ENCODE measurements at regions of chr1 and their contacts with region 1.

Region 1: DNA sequence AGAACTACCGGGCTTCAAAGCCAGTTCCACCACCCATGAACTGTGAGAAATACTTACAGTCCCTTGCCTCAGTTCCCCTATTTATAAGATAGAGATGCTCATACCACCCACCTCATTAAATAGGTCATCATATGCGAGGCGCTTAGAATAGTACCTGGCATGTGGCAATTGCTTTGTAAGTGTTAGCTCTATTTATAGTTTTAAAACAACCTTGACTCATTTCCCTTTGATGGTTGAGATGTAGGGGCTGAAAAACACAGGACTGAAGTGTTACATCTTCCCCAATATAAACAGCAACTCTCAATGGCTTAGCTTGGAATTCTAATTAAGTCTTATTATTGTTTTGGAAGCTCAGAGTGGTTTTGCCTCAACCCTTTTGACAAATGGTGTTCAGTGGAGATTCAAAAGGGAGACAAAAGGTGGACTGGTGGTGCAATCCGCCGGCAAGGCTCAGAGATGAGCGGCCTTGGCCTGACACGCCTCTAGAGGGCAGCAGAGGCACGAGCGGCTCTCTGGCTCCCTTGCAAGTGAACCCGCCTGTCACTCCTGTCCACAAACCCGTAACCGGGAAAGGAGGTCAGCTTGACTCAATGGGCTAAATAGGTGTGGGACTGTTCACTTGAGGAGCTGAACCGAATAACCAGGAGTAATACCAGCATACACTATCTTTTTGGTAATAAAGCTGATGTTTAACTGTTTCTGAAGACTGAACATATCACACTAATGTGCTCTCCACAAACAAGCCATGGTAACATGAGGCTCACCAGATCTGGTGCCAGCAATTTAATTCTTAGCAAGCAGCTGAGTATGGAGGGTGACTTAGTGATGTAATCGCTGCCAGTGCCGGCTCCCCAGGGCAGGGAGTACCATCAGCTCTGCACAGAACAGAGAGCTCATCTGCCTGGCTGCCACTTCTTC is 19.5 kb upstream of the SMYD2 start:
- DNase-seq: peak; percentile 53 to 79
- ATAC-seq: peak; percentile 96 to 99
- H3K4me3 ChIP-seq: no peak overlapping the region
- H3K27ac ChIP-seq: 0 out of 6 replicates have a peak overlapping the region, but pooled peaks of 1 of the 2 experiments have one; percentile 39
- H3K4me1 ChIP-seq: peaks cover 13% of the 10 kb centered on the region; the same call in 2 of the 3 replicates
- CTCF ChIP-seq: peak; percentile 90
- EP300 ChIP-seq: no peak
- POLR2A ChIP-seq: no peak
- RAD21 ChIP-seq: peak; percentile 84 to 86

Region 2: GRCh38 chr1:213840575-213840974 is 420.9 kb before region 1 on chr1:
- CTCF ChIA-PET with region 1: no interaction called
- POLR2A ChIA-PET with region 1: no interaction called
- DNase-seq: no peak
- ATAC-seq: no peak
- H3K4me3 ChIP-seq: no peak overlapping the region
- H3K27ac ChIP-seq: no peak overlapping the region
- H3K4me1 ChIP-seq: no peaks in the 10 kb centered on the region
- CTCF ChIP-seq: no peak
- EP300 ChIP-seq: no peak
- POLR2A ChIP-seq: no peak
- RAD21 ChIP-seq: no peak

Region 3: DNA sequence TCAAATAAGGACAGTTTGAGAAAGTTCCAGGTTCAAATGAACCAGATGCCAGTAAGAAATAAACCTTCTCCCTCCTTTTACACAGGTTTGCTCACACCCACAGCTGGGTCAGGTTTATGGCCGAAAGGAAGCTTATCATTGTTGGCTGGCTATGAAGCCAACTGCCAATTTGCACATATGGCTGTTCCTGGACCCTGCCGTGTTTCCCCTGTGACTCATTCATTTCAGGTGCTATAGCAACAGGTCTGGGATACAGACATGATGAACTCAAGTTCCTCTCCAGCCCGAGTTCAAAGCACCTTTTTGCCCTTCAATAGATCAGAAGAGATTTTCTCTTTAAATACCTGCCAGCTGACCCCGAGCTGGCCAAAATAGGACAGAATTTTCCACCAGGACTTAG is 114.9 kb before region 1 on chr1:
- CTCF ChIA-PET with region 1: no interaction called
- POLR2A ChIA-PET with region 1: no interaction called
- DNase-seq: peak in 1 of 2 experiments; percentile 9
- ATAC-seq: no peak
- H3K4me3 ChIP-seq: no peak overlapping the region
- H3K27ac ChIP-seq: no peak overlapping the region
- H3K4me1 ChIP-seq: no peaks in the 10 kb centered on the region
- CTCF ChIP-seq: no peak
- EP300 ChIP-seq: no peak
- POLR2A ChIP-seq: no peak
- RAD21 ChIP-seq: no peak

Region 4: DNA sequence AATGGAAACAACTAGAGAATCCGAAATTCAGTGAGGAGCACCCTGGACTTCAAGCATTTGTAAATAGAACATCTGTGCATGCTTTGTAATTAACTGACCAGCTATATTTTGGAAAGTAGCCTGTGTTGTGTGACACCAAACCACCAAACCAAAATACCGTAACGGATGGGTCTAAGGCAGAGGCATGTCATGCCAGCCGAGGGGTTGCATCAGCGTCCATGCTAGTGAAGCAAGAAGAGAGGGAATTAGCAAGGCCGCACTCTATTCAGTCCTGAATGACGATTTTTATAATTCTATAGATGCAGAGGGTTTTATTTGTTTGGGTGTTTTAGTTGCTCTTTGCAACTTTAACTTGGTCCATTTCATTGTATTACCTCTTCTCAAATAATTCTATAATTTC is 97.3 kb before region 1 on chr1:
- CTCF ChIA-PET with region 1: no interaction called
- POLR2A ChIA-PET with region 1: no interaction called
- DNase-seq: no peak
- ATAC-seq: no peak
- H3K4me3 ChIP-seq: no peak overlapping the region
- H3K27ac ChIP-seq: no peak overlapping the region
- H3K4me1 ChIP-seq: no peaks in the 10 kb centered on the region
- CTCF ChIP-seq: no peak
- EP300 ChIP-seq: no peak
- POLR2A ChIP-seq: no peak
- RAD21 ChIP-seq: no peak

Region 5: GRCh38 chr1:214241060-214241459 is 20.4 kb before region 1 on chr1:
- CTCF ChIA-PET with region 1: interaction called, 11 read pairs
- POLR2A ChIA-PET with region 1: no interaction called
- DNase-seq: no peak
- ATAC-seq: no peak
- H3K4me3 ChIP-seq: no peak overlapping the region
- H3K27ac ChIP-seq: no peak overlapping the region
- H3K4me1 ChIP-seq: peaks cover 6% of the 10 kb centered on the region; the same call in 2 of the 3 replicates
- CTCF ChIP-seq: no peak
- EP300 ChIP-seq: no peak
- POLR2A ChIP-seq: no peak
- RAD21 ChIP-seq: no peak

Region 6: GRCh38 chr1:214289574-214290272 is 28.3 kb after region 1 on chr1:
- CTCF ChIA-PET with region 1: interaction called, 16 read pairs
- POLR2A ChIA-PET with region 1: no interaction called
- DNase-seq: no peak
- ATAC-seq: no peak
- H3K4me3 ChIP-seq: no peak overlapping the region
- H3K27ac ChIP-seq: no peak overlapping the region
- H3K4me1 ChIP-seq: peaks cover 4% of the 10 kb centered on the region; the same call in 1 of the 3 replicates
- CTCF ChIP-seq: no peak
- EP300 ChIP-seq: no peak
- POLR2A ChIP-seq: no peak
- RAD21 ChIP-seq: no peak

Region 7: GRCh38 chr1:214321705-214322453 is 60.4 kb after region 1 on chr1:
- CTCF ChIA-PET with region 1: interaction called, 251 read pairs
- POLR2A ChIA-PET with region 1: no interaction called
- DNase-seq: no peak
- ATAC-seq: no peak
- H3K4me3 ChIP-seq: no peak overlapping the region
- H3K27ac ChIP-seq: no peak overlapping the region
- H3K4me1 ChIP-seq: no peaks in the 10 kb centered on the region
- CTCF ChIP-seq: no peak
- EP300 ChIP-seq: no peak
- POLR2A ChIP-seq: no peak
- RAD21 ChIP-seq: no peak

Region 8: GRCh38 chr1:214632091-214632490 is 370.6 kb after region 1 on chr1:
- CTCF ChIA-PET with region 1: interaction called, 10 read pairs
- POLR2A ChIA-PET with region 1: no interaction called
- DNase-seq: no peak
- ATAC-seq: no peak
- H3K4me3 ChIP-seq: no peak overlapping the region
- H3K27ac ChIP-seq: no peak overlapping the region
- H3K4me1 ChIP-seq: no peaks in the 10 kb centered on the region
- CTCF ChIP-seq: no peak
- EP300 ChIP-seq: no peak
- POLR2A ChIP-seq: no peak
- RAD21 ChIP-seq: no peak

Measured in A549 (cell line).